ENCODE measurements at regions of chr16 and their contacts with region 1.

Region 1: GRCh38 chr16:84277237-84277823 is 17.3 kb upstream of the WFDC1 start:
- DNase-seq: no peak
- H3K4me3 ChIP-seq: no peak overlapping the region
- H3K27ac ChIP-seq: no peak overlapping the region
- H3K4me1 ChIP-seq: no peaks in the 10 kb centered on the region
- H3K27me3 ChIP-seq: no peaks in the 10 kb centered on the region
- CTCF ChIP-seq: peak; percentile 62 to 80 (median 76)
- POLR2A ChIP-seq: no peak

Region 2: GRCh38 chr16:83878838-83879237 is 398.5 kb before region 1 on chr16:
- intact Hi-C with region 1: no loop called
- DNase-seq: no peak
- H3K4me3 ChIP-seq: no peak overlapping the region
- H3K27ac ChIP-seq: no peak overlapping the region
- H3K4me1 ChIP-seq: no peaks in the 10 kb centered on the region
- H3K27me3 ChIP-seq: no peaks in the 10 kb centered on the region
- CTCF ChIP-seq: peak in 2 of 3 experiments; percentile 24 to 42
- POLR2A ChIP-seq: no peak

Region 3: DNA sequence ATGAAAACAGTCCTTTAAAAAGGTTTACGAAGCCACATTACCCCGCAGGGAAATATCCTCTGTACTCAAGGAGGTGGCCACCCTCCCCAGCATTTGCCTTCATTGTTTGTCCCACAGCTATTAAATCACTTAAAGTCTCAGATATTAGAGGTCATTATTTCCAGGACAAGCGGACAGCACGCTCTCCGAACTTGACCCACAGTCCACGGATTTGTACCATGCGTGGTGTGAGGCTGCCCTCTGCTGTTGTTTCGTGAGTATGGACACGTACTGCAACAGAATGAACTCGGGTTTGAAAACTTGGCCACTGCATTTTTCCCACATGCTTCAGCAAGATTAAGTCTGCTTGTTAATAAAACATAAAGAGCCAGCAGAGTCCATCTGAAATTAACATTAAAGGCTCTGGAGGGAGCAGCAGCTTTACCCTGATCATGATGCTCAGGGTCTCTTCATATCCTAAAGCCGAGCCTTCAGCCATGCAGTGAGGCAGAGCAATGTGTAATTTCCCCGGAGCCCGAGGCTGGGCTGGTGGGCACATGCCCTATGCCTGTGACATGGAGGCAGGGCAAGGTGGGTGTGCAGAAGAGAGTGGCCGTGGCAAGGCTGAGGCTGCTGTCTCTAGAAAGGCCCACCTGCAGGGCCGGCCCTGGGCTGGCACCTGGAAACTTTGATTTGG is 207.4 kb after region 1 on chr16:
- intact Hi-C with region 1: loop called (anchors 5 kb)
- DNase-seq: peak; percentile 52 to 62
- H3K4me3 ChIP-seq: no peak overlapping the region
- H3K27ac ChIP-seq: no peak overlapping the region
- H3K4me1 ChIP-seq: peaks cover 4% of the 10 kb centered on the region
- H3K27me3 ChIP-seq: no peaks in the 10 kb centered on the region
- CTCF ChIP-seq: peak; percentile 59 to 78 (median 60)
- POLR2A ChIP-seq: no peak

Measured in vagina (tissue), 2 donors.